ENCODE measurements at regions of chr10 and their contacts with region 1.

Region 1: DNA sequence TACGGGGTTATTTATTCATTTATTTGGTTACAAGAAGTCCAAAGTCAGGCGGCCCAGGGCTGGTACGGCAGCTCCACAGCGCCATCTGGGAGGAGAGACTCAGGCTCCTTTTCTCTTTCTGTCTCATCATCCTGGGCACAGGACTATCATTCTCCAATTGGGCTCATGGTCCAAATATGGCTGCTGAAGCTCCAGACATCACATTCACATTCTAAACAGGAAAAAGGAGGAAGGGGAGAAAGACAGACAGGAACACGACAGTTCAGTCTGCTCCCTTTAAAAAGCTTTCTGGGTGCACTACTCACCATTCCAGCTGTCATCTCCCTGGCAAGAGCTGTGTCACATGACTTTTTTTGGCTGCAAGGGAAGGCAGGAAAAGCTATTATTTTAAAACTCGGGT is 74.4 kb upstream of the PDZD8 start:
- DNase-seq: peak; percentile 44
- ATAC-seq: peak; percentile 95
- H3K4me3 ChIP-seq: no peak overlapping the region
- H3K27ac ChIP-seq: no peak overlapping the region
- H3K4me1 ChIP-seq: no peaks in the 10 kb centered on the region
- H3K27me3 ChIP-seq: no peaks in the 10 kb centered on the region
- CTCF ChIP-seq: peak; percentile 86 to 96 (median 86)
- POLR2A ChIP-seq: no peak
- RAD21 ChIP-seq: peak; percentile 88

Region 2: GRCh38 chr10:117431160-117431559 is 18.5 kb before region 1 on chr10:
- CTCF ChIA-PET with region 1: interaction called, 11 read pairs
- POLR2A ChIA-PET with region 1: no interaction called
- RAD21 ChIA-PET with region 1: no interaction called
- intact Hi-C with region 1: no loop called
- DNase-seq: peak; percentile 28
- ATAC-seq: peak; percentile 58
- H3K4me3 ChIP-seq: no peak overlapping the region
- H3K27ac ChIP-seq: no peak overlapping the region
- H3K4me1 ChIP-seq: no peaks in the 10 kb centered on the region
- H3K27me3 ChIP-seq: peaks cover 18% of the 10 kb centered on the region; the same call in 1 of the 2 replicates
- CTCF ChIP-seq: peak in 2 of 3 experiments; percentile 34 to 37; a peak in 2 of 6 replicates
- POLR2A ChIP-seq: no peak
- RAD21 ChIP-seq: peak; percentile 58

Region 3: GRCh38 chr10:117461766-117462423 is 12.3 kb after region 1 on chr10:
- CTCF ChIA-PET with region 1: interaction called, 16 read pairs
- POLR2A ChIA-PET with region 1: interaction called, 5 read pairs
- RAD21 ChIA-PET with region 1: no interaction called
- intact Hi-C with region 1: no loop called
- DNase-seq: peak; percentile 77
- ATAC-seq: peak; percentile 86
- H3K4me3 ChIP-seq: no peak overlapping the region
- H3K27ac ChIP-seq: no peak overlapping the region
- H3K4me1 ChIP-seq: peaks cover 7 to 23% of the 10 kb centered on the region in 2 experiments
- H3K27me3 ChIP-seq: no peaks in the 10 kb centered on the region
- CTCF ChIP-seq: no peak
- POLR2A ChIP-seq: no peak
- RAD21 ChIP-seq: no peak

Region 4: DNA sequence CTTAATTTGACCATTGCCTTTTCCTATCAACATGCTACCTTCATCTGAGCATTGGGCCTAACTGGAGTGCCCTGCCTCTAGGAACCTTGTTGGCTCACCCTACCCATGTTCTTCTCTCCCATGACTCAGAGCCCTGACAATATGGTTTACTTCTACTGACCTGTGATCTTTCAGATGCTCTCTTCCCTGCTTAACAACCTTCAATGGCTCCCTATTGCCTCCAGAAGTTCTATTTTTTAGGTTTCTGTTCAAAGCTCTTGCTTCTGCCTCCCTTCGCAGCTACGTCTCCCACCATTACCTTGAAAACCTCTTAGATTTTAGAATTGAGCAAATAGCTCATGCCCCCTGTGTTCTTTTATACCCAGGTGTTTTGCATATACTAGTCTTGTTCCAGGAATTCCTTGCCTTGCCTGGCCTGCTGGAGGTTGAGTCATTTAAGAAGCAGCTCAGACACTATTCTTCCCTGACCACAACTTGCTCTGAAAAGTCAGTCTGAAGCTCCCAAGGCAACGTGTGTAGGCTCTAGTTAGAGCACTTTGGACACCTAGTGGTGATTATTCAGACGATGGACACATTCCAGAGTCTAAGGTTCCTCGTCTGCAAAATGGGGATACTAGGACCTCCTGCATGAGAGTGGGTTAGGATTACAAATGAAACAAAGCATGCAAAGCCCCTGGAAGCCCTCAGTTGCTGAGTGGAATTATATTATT is 28.5 kb after region 1 on chr10:
- CTCF ChIA-PET with region 1: interaction called, 10 read pairs
- POLR2A ChIA-PET with region 1: no interaction called
- RAD21 ChIA-PET with region 1: interaction called in 1 of 2 experiments, 6 read pairs
- intact Hi-C with region 1: no loop called
- DNase-seq: peak; percentile 83
- ATAC-seq: peak; percentile 90
- H3K4me3 ChIP-seq: no peak overlapping the region
- H3K27ac ChIP-seq: no peak overlapping the region
- H3K4me1 ChIP-seq: peaks cover 0 to 10% of the 10 kb centered on the region in 2 experiments; a peak in 2 of 4 replicates
- H3K27me3 ChIP-seq: no peaks in the 10 kb centered on the region
- CTCF ChIP-seq: peak; percentile 55 to 81 (median 61)
- POLR2A ChIP-seq: no peak
- RAD21 ChIP-seq: peak; percentile 83

Region 5: DNA sequence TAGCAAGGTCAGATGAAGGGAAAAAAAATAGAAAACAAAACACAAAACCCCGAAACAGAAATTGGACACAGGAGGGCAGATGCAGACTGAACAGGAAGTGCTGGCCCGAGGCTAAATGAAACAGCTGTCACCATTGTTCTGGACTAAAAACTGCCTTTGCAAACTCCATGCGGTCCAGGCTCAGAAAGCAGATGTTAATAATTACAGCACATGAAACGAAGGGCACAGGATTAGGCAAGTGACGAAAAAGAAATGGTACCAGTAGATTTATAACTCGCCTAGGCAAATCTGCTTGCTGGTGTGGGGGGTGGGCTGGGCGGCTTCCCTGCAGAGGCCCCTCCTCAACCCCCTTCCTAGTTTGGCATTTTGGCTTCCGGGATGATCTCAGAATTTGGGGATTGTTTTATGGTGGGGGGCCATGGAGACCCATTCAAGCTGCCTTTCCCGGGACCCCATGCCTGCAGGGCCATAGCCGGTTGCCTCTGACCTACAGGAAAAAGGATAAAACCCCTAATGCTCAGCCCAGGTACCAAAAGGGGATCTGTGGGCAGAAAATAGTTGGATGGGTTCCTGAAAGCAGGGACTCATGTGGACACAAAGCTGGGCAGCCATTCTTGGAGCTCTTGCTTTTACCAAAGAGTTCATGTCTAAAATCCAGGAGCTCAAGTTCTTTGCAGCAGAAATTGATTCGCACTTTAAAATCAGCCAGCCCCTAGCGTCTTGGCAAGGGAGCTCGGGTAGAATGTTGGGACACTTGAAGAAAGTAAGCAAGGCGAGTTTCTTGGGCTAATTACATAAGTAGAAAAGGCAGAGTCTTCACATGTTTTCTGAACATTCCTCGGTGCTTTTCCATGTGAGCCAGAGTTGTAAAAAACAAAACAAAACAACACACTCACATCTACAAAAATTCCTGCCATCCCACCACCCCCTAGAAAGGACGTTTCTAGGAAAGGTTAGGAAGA is 53.9 kb after region 1 on chr10:
- CTCF ChIA-PET with region 1: no interaction called
- POLR2A ChIA-PET with region 1: no interaction called
- RAD21 ChIA-PET with region 1: no interaction called
- intact Hi-C with region 1: no loop called
- DNase-seq: no peak
- ATAC-seq: no peak
- H3K4me3 ChIP-seq: no peak overlapping the region
- H3K27ac ChIP-seq: no peak overlapping the region
- H3K4me1 ChIP-seq: no peaks in the 10 kb centered on the region
- H3K27me3 ChIP-seq: peaks cover 14% of the 10 kb centered on the region; the same call in 1 of the 2 replicates
- CTCF ChIP-seq: no peak
- POLR2A ChIP-seq: no peak
- RAD21 ChIP-seq: no peak

Region 6: GRCh38 chr10:117653170-117653515 is 203.5 kb after region 1 on chr10:
- CTCF ChIA-PET with region 1: no interaction called
- POLR2A ChIA-PET with region 1: no interaction called
- RAD21 ChIA-PET with region 1: no interaction called
- intact Hi-C with region 1: no loop called
- DNase-seq: peak; percentile 83
- ATAC-seq: peak; percentile 97
- H3K4me3 ChIP-seq: no peak overlapping the region
- H3K27ac ChIP-seq: peak overlapping the region; percentile 4; the same call in 1 of the 2 replicates
- H3K4me1 ChIP-seq: peaks cover 10 to 16% of the 10 kb centered on the region in 2 experiments
- H3K27me3 ChIP-seq: no peaks in the 10 kb centered on the region
- CTCF ChIP-seq: no peak
- POLR2A ChIP-seq: no peak
- RAD21 ChIP-seq: peak; percentile 14; the same call in 1 of the 2 replicates